Breast epithelium (tissue), 4 donors: ENCODE measurements at regions of chr7 and their contacts with region 1.

Region 1: GRCh38 chr7:116809636-116810266 is 52.6 kb upstream of the CAPZA2 start:
- DNase-seq: no peak
- H3K4me3 ChIP-seq: no peak overlapping the region
- H3K27ac ChIP-seq: no peak overlapping the region
- H3K4me1 ChIP-seq: no peaks in the 10 kb centered on the region
- H3K27me3 ChIP-seq: no peaks in the 10 kb centered on the region
- CTCF ChIP-seq: peak; percentile 27 to 78 (median 68)
- POLR2A ChIP-seq: no peak

Region 2: DNA sequence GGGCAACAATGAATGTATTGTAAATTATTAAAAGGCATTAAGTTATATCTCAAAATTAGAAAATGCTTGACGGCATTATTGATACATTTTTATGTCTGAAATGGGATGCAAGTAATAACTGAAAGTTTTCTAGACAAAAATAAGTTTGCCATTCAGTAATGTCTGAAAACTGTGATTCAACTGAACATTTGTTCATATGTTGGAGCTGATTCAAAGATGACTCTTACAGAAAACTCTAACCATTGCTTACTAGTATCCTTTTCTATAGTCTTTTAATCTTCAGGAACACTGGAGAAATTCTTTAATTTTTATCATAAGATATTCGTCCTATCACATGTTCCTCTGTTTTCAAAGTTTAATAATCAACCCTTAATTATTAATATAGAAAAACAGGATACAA is 708.0 kb before region 1 on chr7:
- intact Hi-C with region 1: no loop called
- DNase-seq: no peak
- H3K4me3 ChIP-seq: no peak overlapping the region
- H3K27ac ChIP-seq: no peak overlapping the region
- H3K4me1 ChIP-seq: no peaks in the 10 kb centered on the region
- H3K27me3 ChIP-seq: no peaks in the 10 kb centered on the region
- CTCF ChIP-seq: no peak
- POLR2A ChIP-seq: no peak

Region 3: DNA sequence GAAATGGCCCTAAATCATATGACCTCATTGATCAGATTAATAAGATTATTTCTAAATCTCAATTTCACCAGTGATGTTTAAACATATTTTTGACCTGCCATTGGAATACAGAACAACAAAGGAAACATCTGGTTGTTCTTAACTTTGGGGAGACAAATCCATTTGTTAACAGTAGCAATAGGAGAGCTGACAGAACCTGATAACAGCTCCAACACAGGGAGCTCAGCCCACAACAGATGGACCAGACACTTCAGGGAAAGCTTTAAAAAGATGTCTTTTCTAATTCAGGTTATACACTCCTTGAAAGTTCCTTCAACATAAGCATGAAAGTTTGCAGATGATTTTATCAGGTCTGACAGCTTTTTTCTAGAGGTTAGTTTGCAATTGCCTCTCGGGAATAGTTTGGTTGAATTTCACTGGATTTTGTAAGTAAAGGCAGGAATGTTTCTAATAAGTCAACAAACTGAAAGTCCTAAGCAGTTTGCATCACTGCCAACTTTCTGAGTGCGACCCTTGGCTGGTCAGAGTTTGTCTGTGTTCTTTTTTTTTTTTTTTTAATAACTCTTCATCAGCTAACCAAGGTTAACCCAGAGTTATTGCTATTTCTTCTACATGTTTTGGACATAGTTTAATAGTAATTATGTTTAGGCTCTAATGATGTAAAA is 144.3 kb before region 1 on chr7:
- intact Hi-C with region 1: loop called (anchors 10 kb)
- DNase-seq: no peak
- H3K4me3 ChIP-seq: no peak overlapping the region
- H3K27ac ChIP-seq: no peak overlapping the region
- H3K4me1 ChIP-seq: no peaks in the 10 kb centered on the region
- H3K27me3 ChIP-seq: no peaks in the 10 kb centered on the region
- CTCF ChIP-seq: no peak
- POLR2A ChIP-seq: no peak

Region 4: GRCh38 chr7:117237646-117238045 is 427.9 kb after region 1 on chr7:
- intact Hi-C with region 1: no loop called
- DNase-seq: no peak
- H3K4me3 ChIP-seq: no peak overlapping the region
- H3K27ac ChIP-seq: no peak overlapping the region
- H3K4me1 ChIP-seq: no peaks in the 10 kb centered on the region
- H3K27me3 ChIP-seq: no peaks in the 10 kb centered on the region
- CTCF ChIP-seq: no peak
- POLR2A ChIP-seq: no peak